Prostate gland (tissue), 2 donors: ENCODE measurements at regions of chr5 and their contacts with region 1.

Region 1: DNA sequence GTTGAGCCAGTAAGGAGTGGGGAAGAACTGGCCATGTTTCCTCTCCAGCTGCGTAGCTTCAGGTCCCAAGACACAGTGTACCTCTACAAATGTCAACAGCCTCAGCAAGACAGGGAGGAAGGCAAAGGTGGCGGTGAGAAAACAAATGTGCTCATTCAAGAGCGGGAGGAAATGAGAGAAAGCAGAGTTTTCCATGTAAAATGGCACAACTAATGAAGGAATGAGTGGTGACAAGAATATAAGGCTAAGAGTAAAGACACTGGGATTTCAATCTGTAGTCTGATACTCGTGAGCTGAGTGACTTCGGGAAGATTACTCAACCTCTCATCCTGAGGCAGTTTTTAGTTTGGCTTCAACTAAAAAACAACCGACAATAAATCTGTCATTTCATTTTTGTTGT is 67.6 kb downstream of the DPYSL3 start:
- DNase-seq: no peak
- H3K4me3 ChIP-seq: no peak overlapping the region
- H3K27ac ChIP-seq: peak overlapping the region; percentile 45 to 59
- H3K4me1 ChIP-seq: no peaks in the 10 kb centered on the region
- H3K27me3 ChIP-seq: no peaks in the 10 kb centered on the region
- CTCF ChIP-seq: no peak
- POLR2A ChIP-seq: no peak

Region 2: DNA sequence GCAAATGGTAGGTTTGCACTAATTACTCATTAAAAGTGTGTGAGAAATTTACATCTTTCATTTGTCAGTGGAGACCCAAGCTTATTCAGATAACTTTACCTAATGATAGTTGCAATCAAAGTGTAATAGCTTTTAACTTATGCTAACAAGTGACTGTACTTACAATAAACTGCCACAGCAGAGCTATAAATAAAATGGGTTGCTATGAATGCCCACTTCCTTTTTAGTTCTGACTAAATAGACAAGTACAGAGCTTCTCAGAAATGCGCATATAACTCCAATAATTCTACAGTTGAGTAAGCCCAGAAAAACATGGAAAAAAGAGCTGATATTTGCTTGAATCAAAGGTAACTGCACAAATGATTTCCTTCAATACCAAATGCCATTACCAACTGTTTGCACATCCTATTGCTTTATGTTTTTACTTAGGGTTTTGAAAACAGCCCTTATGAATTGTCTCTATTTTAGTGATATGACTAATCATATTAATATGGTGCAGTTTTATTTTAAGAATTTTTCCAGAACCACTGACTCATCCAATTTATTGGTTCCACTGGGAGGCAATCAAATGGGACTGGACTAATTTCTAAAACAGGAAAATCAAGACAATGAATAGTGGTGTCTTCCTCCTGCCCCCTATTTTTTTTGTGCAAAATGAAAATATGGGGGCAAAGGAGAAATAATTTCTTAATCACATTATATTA is 647.7 kb before region 1 on chr5:
- intact Hi-C with region 1: no loop called
- DNase-seq: no peak
- H3K4me3 ChIP-seq: no peak overlapping the region
- H3K27ac ChIP-seq: no peak overlapping the region
- H3K4me1 ChIP-seq: no peaks in the 10 kb centered on the region
- H3K27me3 ChIP-seq: no peaks in the 10 kb centered on the region
- CTCF ChIP-seq: no peak
- POLR2A ChIP-seq: no peak

Region 3: GRCh38 chr5:147339313-147339712 is 102.9 kb before region 1 on chr5:
- intact Hi-C with region 1: no loop called
- DNase-seq: no peak
- H3K4me3 ChIP-seq: no peak overlapping the region
- H3K27ac ChIP-seq: no peak overlapping the region
- H3K4me1 ChIP-seq: no peaks in the 10 kb centered on the region
- H3K27me3 ChIP-seq: no peaks in the 10 kb centered on the region
- CTCF ChIP-seq: no peak
- POLR2A ChIP-seq: no peak

Region 4: GRCh38 chr5:147407094-147407681 is 35.0 kb before region 1 on chr5:
- intact Hi-C with region 1: loop called (anchors 2 kb)
- DNase-seq: no peak
- H3K4me3 ChIP-seq: no peak overlapping the region
- H3K27ac ChIP-seq: peak overlapping the region; percentile 71
- H3K4me1 ChIP-seq: no peaks in the 10 kb centered on the region
- H3K27me3 ChIP-seq: no peaks in the 10 kb centered on the region
- CTCF ChIP-seq: no peak
- POLR2A ChIP-seq: no peak